Head of caudate nucleus (tissue), 42 donors: ENCODE measurements at regions of chr15 and their contacts with region 1.

Region 1: DNA sequence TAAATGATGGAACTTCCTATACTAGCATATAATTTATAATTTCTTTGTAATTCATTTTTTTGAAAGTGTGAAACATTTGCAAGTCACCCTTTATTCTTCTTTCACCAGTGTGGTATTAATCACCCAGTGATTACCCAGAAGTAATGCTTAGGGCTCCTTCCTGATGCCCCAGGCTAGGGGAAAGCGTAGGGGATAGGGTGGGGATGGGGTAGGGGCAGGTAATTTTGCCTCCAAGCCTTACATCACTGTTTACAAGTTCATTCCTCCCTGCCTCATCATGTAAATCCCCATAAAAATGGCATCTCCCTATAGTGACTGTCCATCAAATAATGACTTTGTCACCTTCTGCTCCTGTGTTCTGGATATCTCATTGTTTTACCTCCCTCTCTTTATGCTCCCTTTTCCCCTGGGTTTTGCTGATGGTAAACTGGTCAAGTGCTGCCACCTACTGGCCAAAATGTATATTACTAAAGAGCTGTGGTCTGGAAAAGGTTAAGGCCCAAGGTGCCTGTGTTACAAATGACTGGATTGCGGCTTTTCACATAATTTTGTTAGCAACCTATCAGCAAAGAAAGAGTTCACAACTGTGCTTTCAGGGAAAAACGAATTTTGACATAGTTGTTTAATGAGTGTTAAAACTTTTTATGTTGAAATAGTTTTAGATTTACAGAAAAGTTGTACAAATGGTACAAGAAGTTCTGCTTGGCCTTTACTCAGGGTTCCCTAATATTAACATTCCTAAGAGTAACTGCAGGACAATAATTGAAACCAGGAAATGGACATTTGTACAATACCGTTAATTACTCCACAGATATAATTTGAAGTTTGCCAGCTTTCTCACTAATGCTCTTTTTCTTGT is 54.7 kb downstream of the ONECUT1 start:
- DNase-seq: peak in 36 of 42 donors; percentile 12 to 90 (median 62)

Region 2: DNA sequence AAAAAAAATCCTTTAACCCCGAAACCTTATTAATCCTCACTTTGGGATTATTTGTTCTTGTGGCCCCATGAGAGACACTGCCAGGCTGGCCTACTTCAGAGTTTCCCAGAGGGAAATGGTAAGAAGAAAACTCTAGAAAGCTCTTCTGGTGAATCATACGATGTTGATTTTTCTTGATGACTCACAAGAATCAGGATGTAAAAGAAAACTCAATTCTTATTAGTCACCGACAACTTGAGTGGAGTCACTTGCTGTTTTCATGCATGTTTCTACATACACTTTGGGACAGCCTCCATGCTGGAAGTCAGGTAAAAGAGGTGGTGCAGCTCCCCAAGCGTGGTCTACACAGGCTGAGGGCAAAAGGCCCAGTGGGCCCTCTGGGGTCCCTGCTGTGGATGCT is 482.7 kb before region 1 on chr15:
- intact Hi-C with region 1: loop called (anchors 5 kb)
- DNase-seq: peak in 1 of 42 donors; percentile 32

Region 3: GRCh38 chr15:53114960-53115359 is 379.5 kb after region 1 on chr15:
- intact Hi-C with region 1: no loop called
- DNase-seq: no peak